Heart left ventricle (tissue), 16 donors: ENCODE measurements at regions of chr1 and their contacts with region 1.

Region 1: DNA sequence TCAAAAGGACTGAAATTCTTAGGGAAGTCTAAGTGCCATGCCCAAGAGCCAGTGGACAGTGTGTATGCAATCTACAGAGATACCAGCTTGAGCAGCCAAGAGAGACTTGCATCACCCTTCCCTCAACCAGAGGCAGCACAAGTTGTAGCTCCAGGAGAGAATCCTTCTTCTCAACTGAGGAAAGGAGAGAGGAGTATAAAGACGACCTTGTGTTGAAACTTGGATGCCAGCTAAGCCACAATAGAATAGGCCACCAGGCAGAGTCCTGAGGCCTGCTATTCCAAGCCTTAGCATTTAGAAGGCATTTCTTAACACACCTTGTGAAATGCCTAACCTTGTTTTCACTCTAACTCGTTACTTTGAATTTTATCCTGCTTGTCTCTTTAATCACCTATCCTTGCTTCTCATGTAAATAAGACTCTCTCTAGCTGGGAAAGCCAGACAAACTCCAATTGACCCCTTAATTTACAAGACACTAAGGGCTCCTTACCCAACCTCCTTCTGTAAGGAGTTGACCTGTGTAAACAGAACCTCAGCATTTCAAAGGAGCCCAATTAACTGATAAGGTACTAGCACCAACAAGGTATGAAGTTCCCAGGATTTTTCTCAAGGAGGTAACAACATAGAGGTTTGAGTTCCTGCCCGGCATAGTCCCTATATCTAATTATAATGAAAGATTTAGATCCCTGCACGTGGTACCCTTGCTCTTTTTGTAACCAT is 738.8 kb downstream of the AMY1C start:
- DNase-seq: no peak
- ATAC-seq: no peak
- H3K4me3 ChIP-seq: no peak overlapping the region
- H3K27ac ChIP-seq: no peak overlapping the region
- H3K4me1 ChIP-seq: no peaks in the 10 kb centered on the region
- H3K27me3 ChIP-seq: no peaks in the 10 kb centered on the region
- CTCF ChIP-seq: no peak
- POLR2A ChIP-seq: no peak

Region 2: DNA sequence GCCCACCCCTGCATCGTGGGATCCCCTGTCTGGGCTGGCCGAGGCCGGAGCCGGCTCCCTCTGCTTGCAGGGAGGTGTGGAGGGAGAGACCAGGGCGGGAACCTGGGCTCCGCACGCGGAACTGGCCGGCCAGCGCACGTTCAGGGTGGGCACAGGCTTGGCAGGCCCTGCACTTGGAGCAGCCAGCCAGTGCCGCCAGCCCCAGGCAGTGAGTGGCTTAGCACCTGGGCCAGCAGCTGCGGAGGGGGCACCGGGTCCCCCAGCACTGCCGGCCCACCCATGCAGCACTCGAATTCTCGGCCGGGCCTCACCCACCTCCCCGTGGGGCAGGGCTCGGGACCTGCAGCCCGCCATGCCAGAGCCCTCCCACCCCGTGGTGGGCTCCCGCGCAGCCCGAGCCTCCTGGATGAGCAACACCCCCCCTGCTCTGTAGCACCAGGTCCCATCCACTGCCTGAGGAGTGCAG is 316.2 kb before region 1 on chr1:
- intact Hi-C with region 1: no loop called
- DNase-seq: peak in 2 of 5 donors; percentile 7 to 42
- ATAC-seq: no peak
- H3K4me3 ChIP-seq: no peak overlapping the region
- H3K27ac ChIP-seq: no peak overlapping the region
- H3K4me1 ChIP-seq: no peaks in the 10 kb centered on the region
- H3K27me3 ChIP-seq: no peaks in the 10 kb centered on the region
- CTCF ChIP-seq: no peak
- POLR2A ChIP-seq: no peak

Region 3: DNA sequence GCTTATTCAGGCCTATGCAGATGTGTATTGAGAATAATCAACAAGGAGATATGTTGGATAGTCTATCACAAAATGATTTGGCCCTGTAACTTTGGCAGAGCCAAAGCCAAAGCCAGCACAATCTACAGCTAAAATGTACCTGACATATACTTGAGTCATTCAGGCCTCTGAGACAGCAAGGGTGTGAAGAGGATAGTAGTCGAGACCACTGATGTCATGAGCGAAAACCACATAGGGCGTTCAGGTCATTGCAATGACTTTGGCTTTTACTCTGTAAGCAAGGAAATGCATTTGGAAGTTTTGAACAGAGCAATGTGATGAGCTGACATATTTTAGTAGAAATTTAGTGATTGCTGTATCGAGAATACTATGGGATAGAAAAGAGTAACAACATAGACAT is 159.2 kb before region 1 on chr1:
- intact Hi-C with region 1: no loop called
- DNase-seq: no peak
- ATAC-seq: no peak
- H3K4me3 ChIP-seq: no peak overlapping the region
- H3K27ac ChIP-seq: no peak overlapping the region
- H3K4me1 ChIP-seq: no peaks in the 10 kb centered on the region
- H3K27me3 ChIP-seq: no peaks in the 10 kb centered on the region
- CTCF ChIP-seq: no peak
- POLR2A ChIP-seq: no peak

Region 4: GRCh38 chr1:104435255-104435654 is 53.2 kb before region 1 on chr1:
- intact Hi-C with region 1: loop called in 1 of 10 experiments (anchors 10 kb)
- DNase-seq: no peak
- ATAC-seq: no peak
- H3K4me3 ChIP-seq: no peak overlapping the region
- H3K27ac ChIP-seq: no peak overlapping the region
- H3K4me1 ChIP-seq: no peaks in the 10 kb centered on the region
- H3K27me3 ChIP-seq: no peaks in the 10 kb centered on the region
- CTCF ChIP-seq: no peak
- POLR2A ChIP-seq: no peak